Astrocyte of the cerebellum (primary cell): ENCODE measurements at regions of chr18 and their contacts with region 1.

Region 1: DNA sequence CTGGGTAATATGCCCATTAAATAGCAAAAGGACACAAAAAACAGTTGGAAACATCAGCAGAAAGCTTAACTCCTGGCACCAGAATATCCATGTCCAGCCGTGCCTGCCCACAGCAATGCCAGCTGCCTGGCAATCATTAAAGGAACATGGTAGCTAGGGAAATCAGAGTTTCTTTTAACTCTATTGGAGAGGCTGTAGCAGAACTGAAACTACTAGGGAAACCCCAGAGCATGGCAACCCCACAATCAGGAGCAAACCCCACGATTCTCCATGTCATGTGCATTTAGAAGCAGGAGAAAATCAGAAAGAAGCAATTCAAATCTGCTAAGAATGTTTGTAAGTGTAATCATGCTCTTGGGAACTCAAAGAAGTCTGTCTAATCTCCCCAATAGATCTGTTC is 409.0 kb upstream of the SMIM21 start:
- DNase-seq: no peak
- H3K4me3 ChIP-seq: no peak overlapping the region
- CTCF ChIP-seq: no peak

Region 2: GRCh38 chr18:75785206-75785605 is 51.3 kb before region 1 on chr18:
- in situ Hi-C with region 1: loop called (anchors 5 kb)
- DNase-seq: no peak
- H3K4me3 ChIP-seq: no peak overlapping the region
- CTCF ChIP-seq: no peak